Mammary epithelial cell (primary cell): ENCODE measurements at regions of chr9 and their contacts with region 1.

Region 1: GRCh38 chr9:87678650-87679515 is 47.0 kb upstream of the CTSL start:
- DNase-seq: peak; percentile 36
- H3K4me3 ChIP-seq: no peak overlapping the region
- H3K27ac ChIP-seq: no peak overlapping the region
- H3K4me1 ChIP-seq: no peaks in the 10 kb centered on the region
- H3K27me3 ChIP-seq: no peaks in the 10 kb centered on the region
- CTCF ChIP-seq: peak; percentile 76 to 85

Region 2: DNA sequence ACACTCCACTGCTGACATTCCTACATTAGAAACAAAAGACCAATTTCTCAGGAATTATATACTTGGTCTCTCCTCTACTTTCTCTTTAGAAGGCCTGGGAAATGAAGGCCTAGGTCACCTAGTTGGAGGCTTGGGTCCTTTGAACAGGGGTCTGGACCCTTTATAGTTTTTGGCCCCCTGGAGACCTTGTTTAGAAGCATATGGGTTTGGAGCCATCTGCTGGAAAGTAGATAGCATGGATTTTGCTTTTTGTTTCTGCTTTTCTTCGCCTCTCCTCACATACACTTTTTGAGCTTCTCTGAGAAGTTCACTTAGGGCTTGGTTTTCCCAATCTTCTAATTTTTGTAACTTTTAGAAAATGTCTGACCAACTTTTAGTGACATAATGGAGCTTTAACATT is 362.6 kb after region 1 on chr9:
- CTCF ChIA-PET with region 1: no interaction called
- dilution Hi-C with region 1: no loop called
- in situ Hi-C with region 1: loop called in 1 of 2 experiments (anchors 25 kb)
- intact Hi-C with region 1: loop called (anchors 5 kb)
- DNase-seq: no peak
- H3K4me3 ChIP-seq: no peak overlapping the region
- H3K27ac ChIP-seq: no peak overlapping the region
- H3K4me1 ChIP-seq: no peaks in the 10 kb centered on the region
- H3K27me3 ChIP-seq: no peaks in the 10 kb centered on the region
- CTCF ChIP-seq: peak in 1 of 2 donors; percentile 43